Cardiac septum (tissue), 1 donor: ENCODE measurements at regions of chr20 and their contacts with region 1.

Region 1: GRCh38 chr20:2172305-2173175 is 70.9 kb downstream of the STK35 start:
- DNase-seq: peak; percentile 87

Region 2: GRCh38 chr20:1764136-1765033 is 408.2 kb before region 1 on chr20:
- intact Hi-C with region 1: loop called (anchors 5 kb)
- DNase-seq: peak; percentile 86

Region 3: GRCh38 chr20:2086177-2086979 is 86.2 kb before region 1 on chr20:
- intact Hi-C with region 1: loop called (anchors 2 kb)
- DNase-seq: no peak